ENCODE measurements at regions of chr6 and their contacts with region 1.

Region 1: DNA sequence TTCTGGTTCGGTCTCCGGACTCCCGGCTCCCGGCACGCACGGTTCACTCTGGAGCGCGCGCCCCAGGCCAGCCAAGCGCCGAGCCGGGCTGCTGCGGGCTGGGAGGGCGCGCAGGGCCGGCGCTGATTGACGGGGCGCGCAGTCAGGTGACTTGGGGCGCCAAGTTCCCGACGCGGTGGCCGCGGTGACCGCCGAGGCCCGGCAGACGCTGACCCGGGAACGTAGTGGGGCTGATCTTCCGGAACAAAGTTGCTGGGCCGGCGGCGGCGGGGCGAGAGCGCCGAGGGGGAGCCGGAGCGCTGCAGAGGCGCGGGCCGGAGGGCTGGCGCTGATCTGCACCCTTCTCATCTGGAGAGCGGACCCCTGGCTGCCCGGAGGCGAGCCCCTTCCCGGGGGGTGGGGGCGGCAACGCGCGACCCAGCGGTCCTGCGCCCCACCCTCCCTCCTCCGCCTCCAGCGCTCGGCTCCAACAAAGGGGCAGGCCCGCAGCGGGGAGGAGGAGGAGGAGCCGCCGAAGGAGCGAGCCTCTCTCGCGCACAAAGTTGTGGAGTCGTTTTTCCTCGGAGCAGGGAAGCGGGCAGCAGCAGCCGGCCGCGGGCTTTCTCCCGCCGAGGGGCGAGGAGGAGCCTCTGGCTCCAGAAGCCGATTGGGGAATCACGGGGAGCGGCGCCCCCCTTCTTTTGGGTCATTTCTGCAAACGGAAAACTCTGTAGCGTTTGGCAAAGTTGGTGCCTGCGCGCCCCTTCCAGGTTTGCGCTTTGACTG is at the start of gene UTRN:
- DNase-seq: peak; percentile 44
- ATAC-seq: peak; percentile 54
- H3K4me3 Mint-ChIP-seq: peak within 1 kb of the TSS; percentile 94
- H3K27ac Mint-ChIP-seq: no peak within 1 kb of the TSS
- H3K4me1 Mint-ChIP-seq: peaks cover 19% of the 10 kb centered on the region
- H3K27me3 Mint-ChIP-seq: peaks cover 6% of the 10 kb centered on the region
- CTCF ChIP-seq: no peak
- total RNA-seq, gene UTRN: 52.2 and 53.5 TPM in 2 replicates

Region 2: DNA sequence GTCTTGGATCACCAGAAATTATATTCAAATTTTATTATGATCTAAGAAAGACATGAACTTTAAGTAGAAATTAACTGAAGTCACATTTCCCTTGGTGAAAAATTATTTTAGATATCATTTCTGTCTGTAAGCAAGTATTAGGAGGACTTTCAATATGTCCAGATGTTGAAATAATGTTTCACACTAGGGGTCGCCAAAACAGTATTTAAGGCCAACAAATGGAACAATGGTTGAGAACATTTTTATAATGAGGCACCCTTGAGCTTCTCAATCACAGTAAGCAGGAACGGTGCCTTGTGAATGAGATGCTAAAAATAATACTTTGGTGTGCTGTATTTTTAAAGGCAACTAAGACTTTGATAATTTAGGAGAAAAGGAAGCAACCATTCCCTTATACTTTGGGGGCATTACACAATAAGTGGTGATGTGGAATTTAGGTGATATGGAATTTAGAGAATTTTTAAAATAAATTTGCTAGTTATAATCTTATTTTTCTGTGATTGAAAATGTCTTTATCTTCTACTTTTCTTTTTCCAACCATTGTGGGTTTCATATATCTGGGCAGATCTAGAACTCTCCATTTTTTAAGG is 180.0 kb before region 1 on chr6:
- CTCF ChIA-PET with region 1: no interaction called
- POLR2A ChIA-PET with region 1: no interaction called
- intact Hi-C with region 1: loop called (anchors 2 kb)
- DNase-seq: no peak
- ATAC-seq: peak; percentile 95
- H3K4me3 Mint-ChIP-seq: no peak overlapping the region
- H3K27ac Mint-ChIP-seq: no peak overlapping the region
- H3K4me1 Mint-ChIP-seq: no peaks in the 10 kb centered on the region
- H3K27me3 Mint-ChIP-seq: no peaks in the 10 kb centered on the region
- CTCF ChIP-seq: no peak

Region 3: GRCh38 chr6:144265390-144265789 is 19.6 kb before region 1 on chr6:
- CTCF ChIA-PET with region 1: no interaction called
- POLR2A ChIA-PET with region 1: no interaction called
- intact Hi-C with region 1: loop called (anchors 1 kb)
- DNase-seq: no peak
- ATAC-seq: peak; percentile 97
- H3K4me3 Mint-ChIP-seq: no peak overlapping the region
- H3K27ac Mint-ChIP-seq: peak overlapping the region; percentile 63
- H3K4me1 Mint-ChIP-seq: peaks cover 23% of the 10 kb centered on the region
- H3K27me3 Mint-ChIP-seq: no peaks in the 10 kb centered on the region
- CTCF ChIP-seq: no peak

Region 4: DNA sequence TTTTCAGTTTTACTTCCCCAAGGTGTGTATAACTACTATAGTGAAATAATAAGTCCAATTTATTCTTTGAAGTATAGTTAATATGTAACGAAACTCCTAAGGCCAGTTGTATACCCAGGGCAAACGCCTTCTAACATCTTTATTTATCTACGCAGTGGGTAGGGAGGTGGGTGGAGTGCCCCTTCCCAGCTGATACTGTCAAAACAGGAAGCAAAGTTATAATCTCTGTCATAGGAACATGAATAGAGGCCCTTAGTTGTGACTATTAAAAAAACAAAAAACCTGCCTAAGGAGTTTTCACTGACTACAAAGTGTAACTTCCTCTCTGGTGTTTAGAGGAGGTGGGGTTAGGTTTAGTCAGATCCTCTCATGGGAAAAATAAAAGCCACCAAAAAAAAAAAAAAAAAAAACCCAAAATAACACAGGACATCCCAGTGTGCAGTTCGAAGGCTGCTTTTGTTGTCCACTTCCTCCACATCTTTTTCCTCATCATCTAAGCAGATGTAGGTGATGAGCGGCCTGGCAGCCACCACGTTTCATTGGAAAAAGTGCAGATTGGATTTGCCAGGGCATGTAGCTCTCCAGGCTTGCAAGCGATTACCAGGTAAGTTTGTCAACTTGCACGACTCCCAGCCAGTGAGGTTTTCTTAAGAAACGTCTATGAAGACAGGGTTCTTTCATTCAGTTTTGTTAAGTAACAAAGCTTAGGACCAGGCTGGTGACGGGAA is 58.9 kb after region 1 on chr6:
- CTCF ChIA-PET with region 1: no interaction called
- POLR2A ChIA-PET with region 1: interaction called, 3 read pairs
- intact Hi-C with region 1: loop called (anchors 2 kb)
- DNase-seq: no peak
- ATAC-seq: peak; percentile 80
- H3K4me3 Mint-ChIP-seq: peak overlapping the region; percentile 93
- H3K27ac Mint-ChIP-seq: peak overlapping the region; percentile 97
- H3K4me1 Mint-ChIP-seq: peaks cover 98% of the 10 kb centered on the region
- H3K27me3 Mint-ChIP-seq: no peaks in the 10 kb centered on the region
- CTCF ChIP-seq: no peak

Region 5: GRCh38 chr6:144415014-144415413 is 130.0 kb after region 1 on chr6:
- CTCF ChIA-PET with region 1: no interaction called
- POLR2A ChIA-PET with region 1: no interaction called
- intact Hi-C with region 1: loop called (anchors 5 kb)
- DNase-seq: no peak
- ATAC-seq: no peak
- H3K4me3 Mint-ChIP-seq: no peak overlapping the region
- H3K27ac Mint-ChIP-seq: no peak overlapping the region
- H3K4me1 Mint-ChIP-seq: peaks cover 46% of the 10 kb centered on the region
- H3K27me3 Mint-ChIP-seq: no peaks in the 10 kb centered on the region
- CTCF ChIP-seq: no peak

Region 6: GRCh38 chr6:144482142-144482541 is 197.2 kb after region 1 on chr6:
- CTCF ChIA-PET with region 1: interaction called, 8 read pairs
- POLR2A ChIA-PET with region 1: no interaction called
- intact Hi-C with region 1: loop called (anchors 2 kb)
- DNase-seq: peak; percentile 39
- ATAC-seq: peak; percentile 91
- H3K4me3 Mint-ChIP-seq: no peak overlapping the region
- H3K27ac Mint-ChIP-seq: peak overlapping the region; percentile 41
- H3K4me1 Mint-ChIP-seq: no peaks in the 10 kb centered on the region
- H3K27me3 Mint-ChIP-seq: no peaks in the 10 kb centered on the region
- CTCF ChIP-seq: no peak

Region 7: DNA sequence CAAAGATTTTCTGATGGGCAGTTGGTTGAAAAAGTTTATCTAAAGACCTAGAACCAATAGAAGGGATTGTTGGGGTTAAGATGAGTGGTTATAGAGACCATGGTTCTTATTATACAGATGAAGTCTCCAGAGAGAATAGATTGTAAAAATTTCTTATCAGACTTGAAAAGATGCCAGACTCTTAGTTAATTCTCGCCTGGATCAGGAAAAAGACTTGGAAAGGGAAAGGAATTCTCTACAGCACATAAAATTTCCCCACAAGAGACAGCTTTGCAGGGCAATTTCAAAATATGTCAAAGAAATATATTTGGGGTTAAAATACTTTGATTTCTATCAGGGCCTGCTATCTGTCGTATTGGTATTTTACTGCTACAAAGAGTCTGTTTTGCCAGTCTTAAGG is 582.8 kb after region 1 on chr6:
- CTCF ChIA-PET with region 1: no interaction called
- POLR2A ChIA-PET with region 1: no interaction called
- intact Hi-C with region 1: no loop called
- DNase-seq: no peak
- ATAC-seq: no peak
- H3K4me3 Mint-ChIP-seq: no peak overlapping the region
- H3K27ac Mint-ChIP-seq: no peak overlapping the region
- H3K4me1 Mint-ChIP-seq: no peaks in the 10 kb centered on the region
- H3K27me3 Mint-ChIP-seq: peaks cover 6% of the 10 kb centered on the region
- CTCF ChIP-seq: no peak